Endothelial cell of umbilical vein (primary cell): ENCODE measurements at regions of chr19 and their contacts with region 1.

Region 1: GRCh38 chr19:10580979-10581631 is 6.0 kb downstream of the AP1M2 start:
- DNase-seq: peak; percentile 88
- H3K4me3 ChIP-seq: no peak overlapping the region
- H3K27ac ChIP-seq: no peak overlapping the region
- H3K4me1 ChIP-seq: no peaks in the 10 kb centered on the region
- H3K27me3 ChIP-seq: no peaks in the 10 kb centered on the region
- CTCF ChIP-seq: peak; percentile 98
- POLR2A ChIP-seq: no peak

Region 2: GRCh38 chr19:10368101-10368803 is 212.9 kb before region 1 on chr19:
- CTCF ChIA-PET with region 1: no interaction called
- POLR2A ChIA-PET with region 1: no interaction called
- dilution Hi-C with region 1: no loop called
- intact Hi-C with region 1: no loop called
- DNase-seq: no peak
- H3K4me3 ChIP-seq: no peak overlapping the region
- H3K27ac ChIP-seq: no peak overlapping the region
- H3K4me1 ChIP-seq: no peaks in the 10 kb centered on the region
- H3K27me3 ChIP-seq: no peaks in the 10 kb centered on the region
- CTCF ChIP-seq: no peak
- POLR2A ChIP-seq: no peak

Region 3: GRCh38 chr19:10454267-10454666 is 126.8 kb before region 1 on chr19:
- CTCF ChIA-PET with region 1: no interaction called
- POLR2A ChIA-PET with region 1: no interaction called
- dilution Hi-C with region 1: no loop called
- intact Hi-C with region 1: no loop called
- DNase-seq: no peak
- H3K4me3 ChIP-seq: no peak overlapping the region
- H3K27ac ChIP-seq: no peak overlapping the region
- H3K4me1 ChIP-seq: no peaks in the 10 kb centered on the region
- H3K27me3 ChIP-seq: no peaks in the 10 kb centered on the region
- CTCF ChIP-seq: no peak
- POLR2A ChIP-seq: no peak

Region 4: GRCh38 chr19:10478903-10479384 is 102.2 kb before region 1 on chr19:
- CTCF ChIA-PET with region 1: interaction called, 10 read pairs
- POLR2A ChIA-PET with region 1: no interaction called
- dilution Hi-C with region 1: no loop called
- intact Hi-C with region 1: no loop called
- DNase-seq: peak; percentile 95
- H3K4me3 ChIP-seq: peak overlapping the region in 1 of 3 experiments; percentile 11
- H3K27ac ChIP-seq: no peak overlapping the region
- H3K4me1 ChIP-seq: peaks cover 7% of the 10 kb centered on the region
- H3K27me3 ChIP-seq: no peaks in the 10 kb centered on the region
- CTCF ChIP-seq: peak in 1 of 2 donors; percentile 71
- POLR2A ChIP-seq: no peak

Region 5: GRCh38 chr19:10602330-10603083 is 21.4 kb after region 1 on chr19:
- CTCF ChIA-PET with region 1: interaction called, 33 read pairs
- POLR2A ChIA-PET with region 1: interaction called, 3 read pairs
- dilution Hi-C with region 1: no loop called
- intact Hi-C with region 1: loop called (anchors 2 kb)
- DNase-seq: peak; percentile 83
- H3K4me3 ChIP-seq: peak overlapping the region; percentile 87 to 93 (median 91)
- H3K27ac ChIP-seq: peak overlapping the region; percentile 74
- H3K4me1 ChIP-seq: peaks cover 25% of the 10 kb centered on the region
- H3K27me3 ChIP-seq: no peaks in the 10 kb centered on the region
- CTCF ChIP-seq: no peak
- POLR2A ChIP-seq: no peak

Region 6: GRCh38 chr19:10618846-10619245 is 37.7 kb after region 1 on chr19:
- CTCF ChIA-PET with region 1: interaction called, 22 read pairs
- POLR2A ChIA-PET with region 1: no interaction called
- dilution Hi-C with region 1: no loop called
- intact Hi-C with region 1: no loop called
- DNase-seq: no peak
- H3K4me3 ChIP-seq: no peak overlapping the region
- H3K27ac ChIP-seq: no peak overlapping the region
- H3K4me1 ChIP-seq: no peaks in the 10 kb centered on the region
- H3K27me3 ChIP-seq: no peaks in the 10 kb centered on the region
- CTCF ChIP-seq: no peak
- POLR2A ChIP-seq: no peak

Region 7: DNA sequence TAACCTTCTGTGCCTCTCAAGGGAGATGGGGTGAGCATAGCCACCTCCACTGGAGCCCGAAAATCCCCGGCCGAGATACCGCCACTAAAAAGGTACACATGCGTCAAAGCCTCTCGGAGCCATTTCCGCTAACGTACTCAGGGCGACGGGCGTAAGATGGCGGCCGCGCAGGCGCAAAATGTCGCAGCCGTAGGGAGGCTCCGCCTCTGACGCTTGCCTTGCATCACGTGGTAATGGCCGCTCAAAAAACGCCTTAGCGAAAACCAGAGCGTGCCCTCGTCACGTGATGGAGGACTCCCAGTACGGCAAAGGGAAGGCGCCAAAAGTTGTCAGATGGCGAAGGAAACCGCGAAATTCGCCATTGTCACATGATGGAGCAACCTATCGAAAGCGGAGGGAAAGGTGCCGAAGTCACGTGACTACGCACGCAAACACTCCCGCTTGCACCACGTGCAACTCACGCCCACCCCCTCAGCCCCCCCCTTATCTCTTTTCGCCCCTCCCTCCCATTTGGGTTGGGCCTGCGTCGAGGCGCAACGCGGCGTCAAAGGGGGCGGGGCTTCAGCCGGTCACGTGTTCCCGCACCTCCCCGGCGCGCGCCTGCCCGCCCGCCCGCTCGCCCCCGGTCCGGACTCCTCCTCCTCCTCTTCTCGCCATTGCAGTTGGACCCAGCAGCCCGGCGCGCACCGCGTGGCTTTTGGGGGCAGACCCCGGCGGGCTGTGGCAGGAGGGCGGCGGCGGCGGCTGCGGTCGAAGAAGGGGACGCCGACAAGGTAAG is 72.8 kb after region 1 on chr19 and contains the start of gene ILF3:
- CTCF ChIA-PET with region 1: interaction called, 654 read pairs
- POLR2A ChIA-PET with region 1: no interaction called
- dilution Hi-C with region 1: no loop called
- intact Hi-C with region 1: no loop called
- DNase-seq: peak; percentile 100
- H3K4me3 ChIP-seq: peak within 1 kb of the TSS; percentile 94 to 99 (median 94)
- H3K27ac ChIP-seq: peak within 1 kb of the TSS; percentile 78
- H3K4me1 ChIP-seq: peaks cover 10% of the 10 kb centered on the region
- H3K27me3 ChIP-seq: no peaks in the 10 kb centered on the region
- CTCF ChIP-seq: no peak
- POLR2A ChIP-seq: peak; percentile 92
- total RNA-seq, gene ILF3: 425 and 459 TPM in 2 replicates

Region 8: GRCh38 chr19:10780368-10780767 is 199.3 kb after region 1 on chr19:
- CTCF ChIA-PET with region 1: no interaction called
- POLR2A ChIA-PET with region 1: no interaction called
- dilution Hi-C with region 1: no loop called
- intact Hi-C with region 1: no loop called
- DNase-seq: peak; percentile 90
- H3K4me3 ChIP-seq: no peak overlapping the region
- H3K27ac ChIP-seq: peak overlapping the region; percentile 96
- H3K4me1 ChIP-seq: peaks cover 19% of the 10 kb centered on the region
- H3K27me3 ChIP-seq: no peaks in the 10 kb centered on the region
- CTCF ChIP-seq: no peak
- POLR2A ChIP-seq: no peak